ENCODE measurements at regions of chr16 and their contacts with region 1.

Region 1: DNA sequence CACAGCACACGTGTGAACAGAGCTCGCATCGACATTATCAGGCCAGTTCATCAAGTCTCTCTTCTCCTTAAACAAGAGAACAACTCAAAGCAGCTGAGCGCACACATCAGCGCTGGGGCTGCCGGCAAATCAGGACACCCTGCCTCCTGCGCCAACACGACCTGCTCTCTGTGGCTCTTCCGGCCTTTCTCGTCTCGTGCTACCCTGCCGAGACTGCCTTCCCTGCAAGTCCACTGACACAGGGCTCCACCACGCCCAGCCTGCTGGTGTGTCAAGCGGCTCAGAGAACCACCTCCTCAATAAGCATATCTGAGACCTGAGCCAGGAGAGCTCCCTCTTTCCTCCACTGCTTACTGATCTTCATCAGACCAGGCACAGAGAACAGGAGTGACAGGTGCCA is 96.9 kb downstream of the ZNF778 start:
- DNase-seq: peak in 8 of 9 experiments; percentile 25 to 76 (median 65)
- ATAC-seq: peak; percentile 32
- H3K4me3 ChIP-seq: peak overlapping the region in 1 of 2 experiments; percentile 2
- H3K4me3 Mint-ChIP-seq: peak overlapping the region; percentile 75
- H3K27ac ChIP-seq: peak overlapping the region; percentile 73 to 94
- H3K27ac Mint-ChIP-seq: peak overlapping the region; percentile 99
- H3K4me1 ChIP-seq: peaks cover 74% of the 10 kb centered on the region
- H3K4me1 Mint-ChIP-seq: peaks cover 85% of the 10 kb centered on the region
- H3K27me3 ChIP-seq: no peaks in the 10 kb centered on the region
- H3K27me3 Mint-ChIP-seq: no peaks in the 10 kb centered on the region
- CTCF ChIP-seq: no peak

Region 2: DNA sequence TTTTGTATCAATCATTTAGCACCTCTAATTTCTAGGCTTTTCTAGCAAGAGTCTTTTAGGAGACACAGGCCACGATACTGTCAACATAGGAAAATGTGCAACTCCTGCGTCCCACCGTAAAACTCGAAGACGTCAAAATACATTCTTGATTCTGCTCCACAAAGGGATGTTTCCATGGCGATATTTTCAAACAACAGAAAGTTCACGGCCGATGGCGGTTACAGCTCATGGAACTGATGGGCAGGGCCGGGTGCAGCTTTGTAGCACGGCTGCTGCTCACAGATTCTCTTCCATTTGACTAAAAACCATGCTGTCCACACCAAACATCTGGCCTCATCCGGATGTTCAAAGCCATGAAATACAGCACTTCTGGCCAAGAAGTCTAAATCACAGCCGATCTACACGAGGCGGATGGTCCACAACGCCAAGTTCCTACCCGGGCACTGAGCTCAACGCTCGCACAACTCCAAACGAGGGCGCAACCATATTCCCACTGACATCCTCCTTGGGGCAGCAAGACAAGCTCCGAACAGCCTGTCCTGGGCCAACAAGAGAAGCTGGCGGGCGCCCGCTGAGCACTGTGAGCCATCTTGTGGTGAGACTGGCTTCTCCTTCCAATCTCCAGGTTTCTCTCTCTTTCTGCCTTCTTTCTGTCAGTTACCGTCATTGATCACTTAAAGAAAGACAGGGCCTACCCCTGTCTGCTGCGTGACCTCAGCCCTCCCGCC is 17.0 kb before region 1 on chr16:
- CTCF ChIA-PET with region 1: interaction called, 6 read pairs
- POLR2A ChIA-PET with region 1: interaction called, 11 read pairs
- intact Hi-C with region 1: no loop called
- DNase-seq: no peak
- ATAC-seq: no peak
- H3K4me3 ChIP-seq: no peak overlapping the region
- H3K4me3 Mint-ChIP-seq: no peak overlapping the region
- H3K27ac ChIP-seq: no peak overlapping the region
- H3K27ac Mint-ChIP-seq: peak overlapping the region; percentile 72
- H3K4me1 ChIP-seq: peaks cover 30% of the 10 kb centered on the region
- H3K4me1 Mint-ChIP-seq: peaks cover 44% of the 10 kb centered on the region
- H3K27me3 ChIP-seq: no peaks in the 10 kb centered on the region
- H3K27me3 Mint-ChIP-seq: no peaks in the 10 kb centered on the region
- CTCF ChIP-seq: no peak

Region 3: DNA sequence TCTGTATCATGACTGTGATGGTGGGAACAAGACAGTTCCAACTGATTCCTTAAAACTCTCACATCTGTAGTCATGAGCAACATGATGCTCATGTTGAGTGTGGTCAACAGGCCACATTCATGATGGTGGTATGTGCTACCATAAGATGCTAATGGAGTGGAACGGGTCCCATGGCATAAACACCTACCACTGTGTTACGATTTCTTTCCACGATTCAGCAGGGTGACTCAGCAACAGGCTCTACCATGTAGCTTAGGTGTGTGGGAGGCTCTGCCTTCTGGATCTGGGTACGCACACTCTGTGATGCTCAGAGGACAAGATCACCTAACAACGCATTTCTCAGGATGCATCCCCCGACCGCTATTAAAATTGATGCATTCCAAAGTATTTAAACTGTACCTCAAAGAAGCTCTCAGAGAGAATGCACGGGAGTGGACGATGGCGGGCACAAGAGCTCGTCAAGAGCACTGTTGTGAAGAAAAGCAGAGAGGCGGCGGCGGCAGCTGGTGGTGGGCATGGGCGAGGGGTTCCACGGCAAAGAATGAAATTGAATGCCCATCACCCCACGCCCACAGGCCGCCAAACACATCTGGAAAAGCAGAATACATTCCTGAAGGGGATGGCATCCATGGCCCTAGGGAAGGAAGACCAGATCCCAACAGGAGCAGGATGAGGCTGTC is 36.5 kb after region 1 on chr16:
- CTCF ChIA-PET with region 1: no interaction called
- POLR2A ChIA-PET with region 1: no interaction called
- intact Hi-C with region 1: loop called in 1 of 2 experiments (anchors 5 kb)
- DNase-seq: no peak
- ATAC-seq: peak; percentile 35
- H3K4me3 ChIP-seq: no peak overlapping the region
- H3K4me3 Mint-ChIP-seq: no peak overlapping the region
- H3K27ac ChIP-seq: no peak overlapping the region
- H3K27ac Mint-ChIP-seq: no peak overlapping the region
- H3K4me1 ChIP-seq: peaks cover 78% of the 10 kb centered on the region
- H3K4me1 Mint-ChIP-seq: peaks cover 90% of the 10 kb centered on the region
- H3K27me3 ChIP-seq: no peaks in the 10 kb centered on the region
- H3K27me3 Mint-ChIP-seq: no peaks in the 10 kb centered on the region
- CTCF ChIP-seq: no peak

Region 4: DNA sequence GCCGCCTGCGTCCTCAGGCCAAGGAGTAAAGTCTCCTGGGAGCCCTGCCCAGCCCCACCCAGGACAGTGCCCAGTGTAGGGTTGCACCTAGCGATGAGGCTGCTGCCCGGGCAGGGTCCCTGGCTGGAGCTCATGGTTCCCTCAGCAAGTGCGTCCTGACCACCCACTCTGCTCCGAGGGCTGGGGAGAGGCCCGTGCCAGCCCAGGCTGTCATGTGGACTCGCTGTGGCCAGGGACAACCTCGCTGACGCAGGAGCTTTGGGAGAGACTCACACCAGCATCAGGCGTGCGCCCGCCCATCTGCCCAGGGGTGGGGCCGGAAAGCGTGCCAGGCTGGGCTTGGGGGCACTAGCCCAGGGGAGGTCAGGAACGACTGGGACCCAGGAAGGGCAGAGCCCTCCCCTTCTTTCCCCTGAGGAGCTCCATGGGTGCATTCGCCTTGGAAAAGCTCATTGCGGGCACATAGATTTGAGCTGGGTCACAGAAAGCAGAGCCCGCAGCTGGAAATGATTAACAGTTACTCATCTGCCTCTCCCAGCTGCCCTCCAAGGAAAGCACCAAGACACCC is 318.8 kb after region 1 on chr16:
- CTCF ChIA-PET with region 1: no interaction called
- POLR2A ChIA-PET with region 1: no interaction called
- intact Hi-C with region 1: no loop called
- DNase-seq: no peak
- ATAC-seq: no peak
- H3K4me3 ChIP-seq: no peak overlapping the region
- H3K4me3 Mint-ChIP-seq: no peak overlapping the region
- H3K27ac ChIP-seq: no peak overlapping the region
- H3K27ac Mint-ChIP-seq: no peak overlapping the region
- H3K4me1 ChIP-seq: no peaks in the 10 kb centered on the region
- H3K4me1 Mint-ChIP-seq: no peaks in the 10 kb centered on the region
- H3K27me3 ChIP-seq: no peaks in the 10 kb centered on the region
- H3K27me3 Mint-ChIP-seq: no peaks in the 10 kb centered on the region
- CTCF ChIP-seq: no peak

Measured in CD8-positive, alpha-beta T cell (primary cell).